ENCODE measurements at regions of chr19 and their contacts with region 1.

Region 1: GRCh38 chr19:58182989-58183816 is at the start of gene ZNF274:
- DNase-seq: peak; percentile 95
- ATAC-seq: peak; percentile 81 to 95 (median 90)
- H3K4me3 ChIP-seq: peak within 1 kb of the TSS; percentile 88
- H3K4me3 Mint-ChIP-seq: peak within 1 kb of the TSS; percentile 98
- H3K27ac ChIP-seq: peak within 1 kb of the TSS; percentile 99
- H3K27ac Mint-ChIP-seq: peak within 1 kb of the TSS; percentile 100
- H3K4me1 ChIP-seq: peaks cover 19% of the 10 kb centered on the region
- H3K4me1 Mint-ChIP-seq: peaks cover 17 to 22% of the 10 kb centered on the region in 2 donors
- H3K27me3 ChIP-seq: no peaks in the 10 kb centered on the region
- H3K27me3 Mint-ChIP-seq: no peaks in the 10 kb centered on the region
- CTCF ChIP-seq: no peak
- total RNA-seq, gene ZNF274: 25.5 to 33.0 (median 30.1) TPM

Region 2: GRCh38 chr19:57769345-57770131 is 413.7 kb before region 1 on chr19 and contains the start of gene ZNF586:
- intact Hi-C with region 1: loop called (anchors 1 kb)
- DNase-seq: peak; percentile 78 to 94
- ATAC-seq: peak; percentile 99 to 100 (median 99)
- H3K4me3 ChIP-seq: peak within 1 kb of the TSS; percentile 91
- H3K4me3 Mint-ChIP-seq: peak within 1 kb of the TSS; percentile 95
- H3K27ac ChIP-seq: peak within 1 kb of the TSS; percentile 90
- H3K27ac Mint-ChIP-seq: peak within 1 kb of the TSS; percentile 88 to 93
- H3K4me1 ChIP-seq: peaks cover 26% of the 10 kb centered on the region
- H3K4me1 Mint-ChIP-seq: peaks cover 40 to 43% of the 10 kb centered on the region in 2 donors
- H3K27me3 ChIP-seq: no peaks in the 10 kb centered on the region
- H3K27me3 Mint-ChIP-seq: no peaks in the 10 kb centered on the region
- CTCF ChIP-seq: no peak
- total RNA-seq, gene ZNF586: 24.0 to 33.3 (median 28.2) TPM

Region 3: DNA sequence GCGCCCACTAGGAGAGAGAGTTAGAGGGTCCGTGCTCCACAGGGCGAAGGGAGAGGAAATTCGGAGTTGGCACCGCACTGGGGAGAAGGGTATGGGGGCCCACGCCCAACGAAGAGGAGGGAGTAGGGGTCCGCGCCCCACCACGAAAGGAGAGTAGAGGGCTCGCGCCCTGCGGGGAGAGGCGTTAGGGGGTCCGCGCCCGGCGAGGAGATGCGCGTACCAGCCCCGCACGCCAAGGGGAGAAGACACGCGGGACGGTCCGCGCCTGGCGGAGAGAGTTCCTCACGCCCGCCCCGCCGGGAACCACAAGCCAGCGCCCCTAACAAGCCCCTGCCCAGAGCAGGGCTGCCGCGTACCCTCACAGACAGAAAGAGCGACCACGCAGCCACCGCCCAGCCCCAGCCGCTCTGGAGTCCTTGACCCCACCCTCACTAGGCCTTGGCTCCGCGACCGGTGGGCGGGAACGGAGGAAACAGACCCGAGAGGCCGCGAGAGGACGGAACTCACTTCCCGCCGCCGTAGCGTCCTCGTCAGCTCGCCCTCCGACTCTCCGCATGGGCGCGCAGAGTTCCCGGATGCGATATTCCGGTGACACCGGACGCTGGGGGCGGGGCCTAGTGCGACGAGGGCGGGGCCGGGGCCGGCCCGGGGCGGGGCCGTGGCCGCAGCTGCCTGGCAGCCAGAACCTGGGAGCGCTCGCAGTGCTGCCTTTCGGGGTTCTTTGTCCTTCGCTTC is 65.2 kb before region 1 on chr19:
- intact Hi-C with region 1: no loop called
- DNase-seq: no peak
- ATAC-seq: no peak
- H3K4me3 ChIP-seq: no peak overlapping the region
- H3K4me3 Mint-ChIP-seq: peak overlapping the region; percentile 9
- H3K27ac ChIP-seq: no peak overlapping the region
- H3K27ac Mint-ChIP-seq: no peak overlapping the region
- H3K4me1 ChIP-seq: no peaks in the 10 kb centered on the region
- H3K4me1 Mint-ChIP-seq: peaks cover 0 to 10% of the 10 kb centered on the region in 2 donors
- H3K27me3 ChIP-seq: peaks cover 4% of the 10 kb centered on the region
- H3K27me3 Mint-ChIP-seq: peaks cover 0 to 9% of the 10 kb centered on the region in 2 donors
- CTCF ChIP-seq: no peak

Region 4: GRCh38 chr19:58166708-58167280 is 16.4 kb before region 1 on chr19:
- intact Hi-C with region 1: no loop called
- DNase-seq: no peak
- ATAC-seq: no peak
- H3K4me3 ChIP-seq: no peak overlapping the region
- H3K4me3 Mint-ChIP-seq: no peak overlapping the region
- H3K27ac ChIP-seq: no peak overlapping the region
- H3K27ac Mint-ChIP-seq: no peak overlapping the region
- H3K4me1 ChIP-seq: no peaks in the 10 kb centered on the region
- H3K4me1 Mint-ChIP-seq: no peaks in the 10 kb centered on the region
- H3K27me3 ChIP-seq: no peaks in the 10 kb centered on the region
- H3K27me3 Mint-ChIP-seq: peaks cover 0 to 4% of the 10 kb centered on the region in 2 donors
- CTCF ChIP-seq: no peak

Region 5: GRCh38 chr19:58305065-58305931 is 122.1 kb after region 1 on chr19 and contains the start of gene ERVK3-1:
- intact Hi-C with region 1: loop called (anchors 2 kb)
- DNase-seq: peak; percentile 86 to 98
- ATAC-seq: peak; percentile 94 to 99 (median 95)
- H3K4me3 ChIP-seq: peak within 1 kb of the TSS; percentile 60
- H3K4me3 Mint-ChIP-seq: peak within 1 kb of the TSS; percentile 98
- H3K27ac ChIP-seq: peak within 1 kb of the TSS; percentile 84
- H3K27ac Mint-ChIP-seq: peak within 1 kb of the TSS; percentile 99
- H3K4me1 ChIP-seq: peaks cover 10% of the 10 kb centered on the region
- H3K4me1 Mint-ChIP-seq: peaks cover 40 to 55% of the 10 kb centered on the region in 2 donors
- H3K27me3 ChIP-seq: no peaks in the 10 kb centered on the region
- H3K27me3 Mint-ChIP-seq: no peaks in the 10 kb centered on the region
- CTCF ChIP-seq: no peak
- total RNA-seq, gene ERVK3-1: 96.1 to 142 (median 119) TPM

Region 6: GRCh38 chr19:58451358-58452101 is 268.3 kb after region 1 on chr19 and contains the start of gene ZNF324B:
- intact Hi-C with region 1: loop called (anchors 2 kb)
- DNase-seq: peak; percentile 95 to 99
- ATAC-seq: peak; percentile 95 to 98 (median 95)
- H3K4me3 ChIP-seq: peak within 1 kb of the TSS; percentile 53
- H3K4me3 Mint-ChIP-seq: peak within 1 kb of the TSS; percentile 91
- H3K27ac ChIP-seq: peak within 1 kb of the TSS; percentile 52
- H3K27ac Mint-ChIP-seq: peak within 1 kb of the TSS; percentile 84 to 89
- H3K4me1 ChIP-seq: peaks cover 15% of the 10 kb centered on the region
- H3K4me1 Mint-ChIP-seq: peaks cover 19 to 26% of the 10 kb centered on the region in 2 donors
- H3K27me3 ChIP-seq: no peaks in the 10 kb centered on the region
- H3K27me3 Mint-ChIP-seq: peaks cover 18 to 30% of the 10 kb centered on the region in 2 donors
- CTCF ChIP-seq: no peak
- total RNA-seq, gene ZNF324B: 10.4 to 11.4 (median 11.4) TPM

Region 7: DNA sequence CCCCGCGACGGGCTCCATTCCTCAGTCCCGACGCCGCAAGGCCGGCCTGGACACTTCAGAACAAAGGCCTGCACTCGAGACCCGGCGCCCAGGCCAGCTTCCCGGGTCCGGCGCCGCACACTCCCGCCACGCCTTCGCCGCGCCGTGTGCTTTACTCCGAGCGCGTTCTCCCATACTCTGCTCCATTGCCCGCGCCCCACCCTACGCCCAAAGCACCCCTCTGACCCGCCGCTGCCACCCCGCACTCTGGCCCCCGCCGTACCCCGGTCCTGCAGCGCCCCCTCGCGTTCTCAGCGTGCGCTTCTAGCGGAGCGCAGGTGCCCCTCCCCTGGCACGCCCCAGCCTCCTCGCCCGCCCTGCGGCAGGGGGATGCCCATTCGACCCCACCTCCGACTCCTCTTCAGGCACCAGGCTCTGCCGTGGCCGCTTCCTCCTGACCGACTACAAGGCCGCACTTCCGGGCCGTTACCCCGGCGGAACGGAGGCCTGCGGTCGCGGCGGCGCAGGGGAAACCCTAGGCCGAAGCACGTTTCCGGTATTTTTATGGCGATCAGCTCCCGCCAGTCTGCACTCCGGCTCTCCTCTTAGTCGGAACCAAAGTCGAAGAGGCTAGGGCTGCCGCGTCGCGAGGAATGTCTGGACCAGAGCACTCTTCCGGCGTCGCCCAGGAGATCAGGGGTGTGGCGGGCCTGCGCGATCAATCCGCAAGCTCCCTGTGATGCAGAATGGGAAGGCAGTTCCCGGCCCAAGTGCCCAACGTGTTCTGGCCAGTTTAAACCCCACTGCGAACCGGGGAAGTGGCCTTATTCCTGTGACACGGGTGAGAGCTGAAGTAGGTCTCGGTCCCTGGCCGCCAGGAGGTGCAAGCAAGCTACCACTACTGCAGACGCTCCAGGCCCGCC is 336.4 kb after region 1 on chr19 and contains the start of gene ZBTB45:
- intact Hi-C with region 1: loop called (anchors 2 kb)
- DNase-seq: peak; percentile 91 to 95
- ATAC-seq: peak; percentile 80 to 93 (median 83)
- H3K4me3 ChIP-seq: peak within 1 kb of the TSS; percentile 81
- H3K4me3 Mint-ChIP-seq: peak within 1 kb of the TSS; percentile 97
- H3K27ac ChIP-seq: peak within 1 kb of the TSS; percentile 98
- H3K27ac Mint-ChIP-seq: peak within 1 kb of the TSS; percentile 97 to 100
- H3K4me1 ChIP-seq: peaks cover 38% of the 10 kb centered on the region
- H3K4me1 Mint-ChIP-seq: peaks cover 25 to 46% of the 10 kb centered on the region in 2 donors
- H3K27me3 ChIP-seq: no peaks in the 10 kb centered on the region
- H3K27me3 Mint-ChIP-seq: no peaks in the 10 kb centered on the region
- CTCF ChIP-seq: peak; percentile 71
- total RNA-seq, gene ZBTB45: 9.6 to 12.6 (median 9.8) TPM